Caco-2 (cell line): ENCODE measurements at regions of chr6 and their contacts with region 1.

Region 1: DNA sequence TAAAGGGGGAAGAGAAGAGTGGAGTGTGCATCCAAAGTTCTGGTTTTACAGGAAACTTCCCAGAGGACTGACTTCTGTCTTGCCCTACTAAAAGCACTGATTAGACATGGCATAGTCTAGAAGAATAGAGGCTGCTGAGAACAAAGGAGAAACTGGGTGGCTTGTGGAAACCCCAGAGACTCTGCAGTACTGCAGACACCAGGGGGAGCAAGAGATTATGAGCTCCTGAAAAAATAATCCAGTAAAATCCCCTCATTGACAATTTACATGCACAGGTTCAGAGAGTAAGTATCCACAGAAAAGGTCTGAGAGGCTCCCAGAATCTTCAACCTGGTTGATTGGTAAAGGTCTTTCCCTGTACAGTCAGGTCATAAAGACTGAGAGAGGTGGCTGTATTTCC is 48.7 kb upstream of the CLVS2 start:
- DNase-seq: peak in 1 of 2 experiments; percentile 27
- H3K4me3 ChIP-seq: no peak overlapping the region
- H3K4me3 Mint-ChIP-seq: no peak overlapping the region
- H3K27ac Mint-ChIP-seq: no peak overlapping the region
- H3K4me1 ChIP-seq: no peaks in the 10 kb centered on the region
- H3K4me1 Mint-ChIP-seq: no peaks in the 10 kb centered on the region
- H3K27me3 ChIP-seq: no peaks in the 10 kb centered on the region
- H3K27me3 Mint-ChIP-seq: peaks cover 7% of the 10 kb centered on the region
- CTCF ChIP-seq: peak; percentile 26 to 63

Region 2: DNA sequence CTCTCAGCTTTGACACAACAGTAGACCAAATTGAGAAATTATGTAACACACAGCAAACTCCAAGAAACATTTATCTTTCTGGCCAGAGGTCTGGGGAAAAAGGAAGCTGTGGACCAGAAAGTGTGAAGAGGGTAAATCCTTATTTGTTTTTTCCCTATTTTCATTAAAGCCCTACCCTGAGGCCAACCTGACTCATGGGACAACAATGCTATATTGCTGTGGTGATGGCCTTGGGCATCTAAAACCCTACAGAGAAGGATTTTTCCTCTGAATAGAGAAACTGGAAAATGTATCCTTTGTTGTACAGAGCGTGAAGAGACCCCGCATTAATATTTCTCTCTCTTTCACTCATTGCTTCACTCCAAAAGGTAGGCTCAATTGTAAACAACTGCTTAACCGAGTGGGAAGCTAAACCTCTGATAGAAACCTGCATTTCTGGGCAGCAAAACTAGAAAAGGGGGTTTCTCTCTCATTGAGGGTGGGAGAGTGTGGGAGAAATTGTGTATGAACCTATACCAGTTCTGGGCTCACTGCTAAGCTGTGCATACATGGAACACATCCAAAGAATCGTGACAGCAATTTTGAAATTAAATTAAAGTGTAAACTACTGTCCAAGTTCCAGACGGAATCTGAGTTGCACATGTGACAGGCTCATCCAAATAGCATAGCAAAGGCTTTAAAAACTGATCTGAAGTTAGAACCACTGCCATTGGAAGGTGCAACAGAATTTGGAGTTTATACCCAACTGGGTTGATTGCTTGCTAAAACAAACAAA is 224.2 kb after region 1 on chr6:
- CTCF ChIA-PET with region 1: no interaction called
- POLR2A ChIA-PET with region 1: no interaction called
- intact Hi-C with region 1: no loop called
- DNase-seq: no peak
- H3K4me3 ChIP-seq: no peak overlapping the region
- H3K4me3 Mint-ChIP-seq: no peak overlapping the region
- H3K27ac Mint-ChIP-seq: no peak overlapping the region
- H3K4me1 ChIP-seq: no peaks in the 10 kb centered on the region
- H3K4me1 Mint-ChIP-seq: no peaks in the 10 kb centered on the region
- H3K27me3 ChIP-seq: no peaks in the 10 kb centered on the region
- H3K27me3 Mint-ChIP-seq: no peaks in the 10 kb centered on the region
- CTCF ChIP-seq: no peak

Region 3: DNA sequence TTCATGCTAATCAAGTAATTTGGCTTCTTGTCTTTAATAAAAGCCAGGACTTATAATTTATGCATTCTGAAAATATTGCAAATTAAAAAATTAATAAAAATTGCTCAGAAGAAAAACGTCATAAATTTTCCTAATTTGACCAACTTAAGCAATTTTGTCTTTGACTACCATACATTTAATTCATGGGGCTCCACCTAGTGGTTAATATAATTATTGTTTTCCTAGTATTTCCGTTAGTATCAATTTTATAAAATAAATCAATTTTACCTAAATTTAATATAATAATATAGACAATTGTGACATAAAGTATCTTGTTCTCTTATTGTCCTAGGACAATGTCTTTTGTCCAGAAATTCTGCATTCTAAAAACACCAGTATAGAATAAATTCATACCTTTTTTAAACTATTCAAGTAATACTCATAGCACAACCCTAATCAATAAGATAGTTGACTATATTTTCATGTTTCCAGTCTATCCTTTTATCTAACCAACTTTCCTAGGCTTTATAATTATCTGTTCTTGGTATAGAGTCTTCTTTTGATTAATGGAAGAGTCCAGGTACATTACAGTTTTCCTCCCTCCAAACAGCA is 369.5 kb after region 1 on chr6:
- CTCF ChIA-PET with region 1: no interaction called
- POLR2A ChIA-PET with region 1: no interaction called
- intact Hi-C with region 1: loop called (anchors 1 kb)
- DNase-seq: no peak
- H3K4me3 ChIP-seq: no peak overlapping the region
- H3K4me3 Mint-ChIP-seq: no peak overlapping the region
- H3K27ac Mint-ChIP-seq: no peak overlapping the region
- H3K4me1 ChIP-seq: no peaks in the 10 kb centered on the region
- H3K4me1 Mint-ChIP-seq: no peaks in the 10 kb centered on the region
- H3K27me3 ChIP-seq: no peaks in the 10 kb centered on the region
- H3K27me3 Mint-ChIP-seq: peaks cover under 1% of the 10 kb centered on the region
- CTCF ChIP-seq: peak; percentile 15 to 55